ENCODE measurements at regions of chr14 and their contacts with region 1.

Region 1: DNA sequence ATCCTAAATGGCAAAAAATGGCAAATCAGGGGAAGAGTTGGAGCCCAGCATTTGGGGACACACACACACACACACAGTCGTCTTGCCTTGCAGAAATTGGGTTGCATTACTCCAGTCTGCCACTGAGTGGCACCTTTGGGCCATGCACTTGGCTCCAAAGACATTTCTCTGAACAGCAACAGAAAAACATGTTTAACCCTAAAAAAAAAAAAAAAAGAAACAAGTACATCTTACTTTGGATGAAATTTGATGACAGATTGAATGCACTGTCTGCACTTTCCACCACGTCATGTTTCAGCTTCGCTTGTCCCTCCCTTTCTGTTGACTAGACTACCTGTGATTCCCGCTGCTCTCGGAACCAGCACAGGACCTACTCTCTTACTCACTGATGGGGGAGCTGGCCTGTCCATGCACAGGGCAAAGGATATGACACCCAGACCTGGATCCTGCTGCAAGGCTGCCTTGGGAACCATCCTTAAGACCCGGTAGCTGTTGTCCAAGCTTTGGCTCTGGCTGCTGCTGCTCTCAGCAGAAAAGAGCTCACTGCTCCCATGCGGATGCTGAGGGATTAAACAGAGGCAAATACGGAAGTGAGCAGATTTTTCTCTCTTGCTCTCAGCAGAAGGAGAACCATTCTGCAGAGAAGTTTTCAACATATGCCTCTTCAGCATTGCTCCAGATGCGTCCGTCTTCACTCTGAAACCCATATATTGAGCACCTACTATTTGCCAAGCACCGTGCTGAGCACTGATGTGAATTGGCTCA is 376.8 kb downstream of the DPF3 start:
- DNase-seq: peak; percentile 81
- H3K4me3 Mint-ChIP-seq: no peak overlapping the region
- H3K27ac Mint-ChIP-seq: no peak overlapping the region
- H3K4me1 Mint-ChIP-seq: peaks cover 54% of the 10 kb centered on the region
- H3K27me3 Mint-ChIP-seq: peaks cover 4% of the 10 kb centered on the region

Region 2: DNA sequence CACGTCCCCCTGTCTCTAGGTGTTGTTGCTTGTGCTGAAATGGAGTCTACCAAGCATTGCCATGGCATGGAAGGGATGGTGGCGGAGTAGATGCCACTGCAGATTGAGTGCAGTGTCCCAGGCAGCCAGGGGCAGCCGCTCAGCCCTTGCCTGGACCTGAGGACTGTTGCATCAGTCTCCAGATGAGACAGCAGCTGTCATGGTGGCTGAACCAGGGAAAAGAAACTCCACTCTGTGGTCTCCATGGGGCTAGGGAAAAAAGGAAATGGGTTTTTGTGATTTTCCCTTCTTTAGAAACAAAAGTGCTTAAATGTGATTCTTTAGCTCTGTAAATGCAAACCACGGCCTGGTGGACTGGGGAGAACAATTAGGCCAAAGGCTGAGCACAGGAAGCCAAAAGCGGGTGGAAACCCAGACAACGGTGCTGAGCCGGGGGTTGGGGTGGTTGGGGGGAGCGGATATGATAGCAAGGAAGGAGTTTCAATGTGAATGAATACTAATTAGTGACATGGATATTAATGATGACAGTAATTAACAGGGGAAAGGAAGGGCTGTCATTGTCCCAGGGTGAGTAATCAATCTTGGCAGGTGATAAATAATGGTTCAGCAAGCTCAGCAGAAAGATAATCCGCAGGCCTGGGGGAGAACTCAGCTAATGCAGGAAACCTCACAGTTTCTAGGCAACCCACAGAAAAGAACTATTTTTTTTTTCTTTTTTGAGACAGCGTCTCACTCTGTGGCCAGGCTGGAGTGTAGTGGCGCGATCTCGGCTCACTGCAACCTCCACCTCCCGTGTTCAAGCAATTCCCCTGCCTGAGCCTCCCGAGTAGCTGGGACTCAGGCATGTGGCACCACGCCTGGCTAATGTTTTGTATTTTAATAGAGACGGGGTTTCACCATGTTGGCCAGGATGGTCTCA is 65.8 kb before region 1 on chr14:
- CTCF ChIA-PET with region 1: interaction called, 3 read pairs
- POLR2A ChIA-PET with region 1: no interaction called
- intact Hi-C with region 1: loop called (anchors 2 kb)
- DNase-seq: peak; percentile 72
- H3K4me3 Mint-ChIP-seq: no peak overlapping the region
- H3K27ac Mint-ChIP-seq: peak overlapping the region; percentile 72
- H3K4me1 Mint-ChIP-seq: peaks cover 28% of the 10 kb centered on the region
- H3K27me3 Mint-ChIP-seq: peaks cover 4% of the 10 kb centered on the region

Region 3: DNA sequence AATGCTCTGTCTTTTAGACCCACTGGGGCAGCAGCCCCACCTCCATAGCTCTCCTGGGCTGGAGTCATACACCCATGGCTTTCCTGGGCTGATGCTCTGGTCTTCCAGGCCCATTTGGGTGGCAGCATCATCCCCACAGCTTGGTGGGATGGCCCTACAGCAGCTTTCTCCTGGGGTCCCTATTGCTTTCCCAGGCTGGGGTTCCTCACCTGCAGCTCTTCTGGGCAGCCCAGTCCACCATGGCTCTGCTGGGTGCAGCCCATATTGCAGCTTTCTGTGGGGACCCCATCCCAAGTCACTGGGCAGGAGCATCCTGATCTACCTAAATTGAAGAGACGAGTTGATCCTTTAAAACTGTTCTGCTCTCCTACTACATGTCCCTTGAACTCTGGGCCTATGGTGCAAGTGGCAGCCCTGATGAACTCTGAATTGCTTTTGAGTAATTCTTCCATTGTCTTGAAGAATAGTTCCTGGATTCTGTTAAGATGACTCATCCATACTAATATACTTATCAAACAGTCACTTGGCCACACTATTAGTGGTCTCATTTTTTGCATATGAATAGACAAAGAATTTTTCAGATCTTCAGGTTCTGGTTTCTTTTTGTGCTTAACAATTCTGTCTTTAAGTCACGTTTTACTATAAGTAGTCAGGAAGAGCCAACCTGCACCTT is 13.3 kb before region 1 on chr14:
- CTCF ChIA-PET with region 1: interaction called, 11 read pairs
- POLR2A ChIA-PET with region 1: no interaction called
- intact Hi-C with region 1: no loop called
- DNase-seq: no peak
- H3K4me3 Mint-ChIP-seq: no peak overlapping the region
- H3K27ac Mint-ChIP-seq: no peak overlapping the region
- H3K4me1 Mint-ChIP-seq: no peaks in the 10 kb centered on the region
- H3K27me3 Mint-ChIP-seq: no peaks in the 10 kb centered on the region

Region 4: DNA sequence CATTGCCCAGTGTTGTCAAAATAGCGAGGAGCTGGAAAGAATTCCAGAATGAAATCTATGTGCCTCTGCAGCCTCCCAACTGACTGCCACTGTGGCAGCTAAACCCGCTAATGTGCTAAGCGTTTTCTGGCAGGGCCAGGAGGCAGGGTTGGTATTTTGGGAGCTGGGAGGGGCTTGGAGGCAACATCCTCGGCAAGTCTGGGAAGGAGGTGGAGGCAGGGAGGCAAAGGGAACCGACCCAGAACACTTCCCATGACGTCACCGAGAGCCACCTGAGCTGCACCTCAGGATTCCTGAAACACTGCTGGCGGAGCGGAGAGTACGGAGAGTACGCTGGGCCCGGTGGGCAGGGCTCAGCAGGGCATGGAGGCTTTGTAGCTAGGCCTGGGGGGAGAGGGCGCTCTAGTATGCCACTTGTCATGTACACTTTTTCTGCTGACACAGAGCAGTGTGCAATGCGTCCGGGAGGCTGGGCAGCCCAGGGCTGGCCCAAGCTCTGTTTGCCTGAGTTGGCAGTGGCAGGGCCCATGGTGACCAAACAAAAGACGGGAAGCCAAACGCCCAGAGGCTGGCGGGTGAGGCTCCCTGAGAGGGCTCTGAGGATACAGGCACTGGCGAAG is 295.3 kb after region 1 on chr14:
- CTCF ChIA-PET with region 1: interaction called, 3 read pairs
- POLR2A ChIA-PET with region 1: no interaction called
- intact Hi-C with region 1: loop called (anchors 2 kb)
- DNase-seq: no peak
- H3K4me3 Mint-ChIP-seq: no peak overlapping the region
- H3K27ac Mint-ChIP-seq: no peak overlapping the region
- H3K4me1 Mint-ChIP-seq: peaks cover 36% of the 10 kb centered on the region
- H3K27me3 Mint-ChIP-seq: no peaks in the 10 kb centered on the region

Region 5: GRCh38 chr14:72904840-72905561 is 387.9 kb after region 1 on chr14:
- CTCF ChIA-PET with region 1: interaction called, 278 read pairs
- POLR2A ChIA-PET with region 1: no interaction called
- intact Hi-C with region 1: loop called (anchors 1 kb)
- DNase-seq: peak; percentile 71
- H3K4me3 Mint-ChIP-seq: no peak overlapping the region
- H3K27ac Mint-ChIP-seq: no peak overlapping the region
- H3K4me1 Mint-ChIP-seq: no peaks in the 10 kb centered on the region
- H3K27me3 Mint-ChIP-seq: peaks cover 6% of the 10 kb centered on the region

Region 6: GRCh38 chr14:73124180-73124894 is 607.2 kb after region 1 on chr14:
- CTCF ChIA-PET with region 1: no interaction called
- POLR2A ChIA-PET with region 1: no interaction called
- intact Hi-C with region 1: loop called (anchors 5 kb)
- DNase-seq: no peak
- H3K4me3 Mint-ChIP-seq: no peak overlapping the region
- H3K27ac Mint-ChIP-seq: peak overlapping the region; percentile 23
- H3K4me1 Mint-ChIP-seq: no peaks in the 10 kb centered on the region
- H3K27me3 Mint-ChIP-seq: no peaks in the 10 kb centered on the region